ENCODE measurements at regions of chr2 and their contacts with region 1.

Region 1: DNA sequence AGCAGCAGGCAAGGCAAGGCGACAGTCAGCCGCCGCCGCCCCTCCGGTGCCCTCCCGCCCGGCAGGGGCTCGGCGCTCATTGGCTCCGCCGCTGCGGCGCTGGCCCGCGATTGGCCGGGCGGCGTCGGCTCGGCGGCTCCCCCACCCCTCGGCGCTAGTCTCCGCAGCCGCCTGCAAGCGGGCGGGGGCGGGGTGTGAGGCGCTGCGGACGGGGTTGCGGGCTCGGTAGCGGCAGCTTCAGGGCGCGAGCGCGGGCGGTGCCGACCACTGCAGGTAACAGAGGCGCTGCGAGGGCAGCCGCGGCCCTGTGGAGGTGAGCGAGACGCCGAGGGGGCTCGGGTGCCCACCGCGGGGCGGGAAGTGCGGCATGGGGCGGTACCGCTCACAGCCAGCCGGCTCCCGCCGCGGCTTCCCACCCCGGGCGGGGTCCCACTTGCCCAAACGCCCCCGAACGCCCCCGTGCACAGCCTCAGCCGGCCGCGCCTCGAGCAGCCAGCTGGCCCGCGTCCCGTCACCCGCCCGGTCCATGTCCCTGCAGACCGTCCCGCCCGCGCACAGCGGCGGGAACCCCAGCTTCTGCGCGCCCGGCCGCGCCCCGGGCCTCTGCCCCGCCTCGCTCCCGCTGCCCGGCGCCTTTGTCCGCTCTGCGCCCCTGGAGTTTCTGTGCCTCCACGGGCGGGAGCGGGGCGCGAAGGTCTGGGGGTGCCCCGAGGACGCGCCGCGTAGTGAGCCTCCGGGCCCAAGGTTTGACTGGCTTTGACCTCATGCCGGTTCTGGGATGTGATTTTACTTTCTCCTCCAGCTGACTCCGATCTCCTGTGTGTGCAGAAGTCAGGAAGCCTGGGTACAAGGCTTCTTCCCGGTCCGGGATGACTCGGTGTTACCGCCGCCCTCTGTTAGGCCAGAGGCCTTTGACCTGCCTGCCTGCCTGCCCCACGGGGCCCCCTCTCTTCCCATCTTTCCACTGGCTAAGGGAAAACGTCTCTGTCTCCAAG is at the start of gene SANBR:
- DNase-seq: peak; percentile 24 to 88
- H3K4me3 ChIP-seq: peak within 1 kb of the TSS; percentile 88 to 91
- H3K27ac ChIP-seq: peak within 1 kb of the TSS; percentile 54 to 59
- H3K4me1 ChIP-seq: no peaks in the 10 kb centered on the region
- H3K27me3 ChIP-seq: no peaks in the 10 kb centered on the region
- CTCF ChIP-seq: no peak
- total RNA-seq, gene SANBR: 10.7 TPM

Region 2: DNA sequence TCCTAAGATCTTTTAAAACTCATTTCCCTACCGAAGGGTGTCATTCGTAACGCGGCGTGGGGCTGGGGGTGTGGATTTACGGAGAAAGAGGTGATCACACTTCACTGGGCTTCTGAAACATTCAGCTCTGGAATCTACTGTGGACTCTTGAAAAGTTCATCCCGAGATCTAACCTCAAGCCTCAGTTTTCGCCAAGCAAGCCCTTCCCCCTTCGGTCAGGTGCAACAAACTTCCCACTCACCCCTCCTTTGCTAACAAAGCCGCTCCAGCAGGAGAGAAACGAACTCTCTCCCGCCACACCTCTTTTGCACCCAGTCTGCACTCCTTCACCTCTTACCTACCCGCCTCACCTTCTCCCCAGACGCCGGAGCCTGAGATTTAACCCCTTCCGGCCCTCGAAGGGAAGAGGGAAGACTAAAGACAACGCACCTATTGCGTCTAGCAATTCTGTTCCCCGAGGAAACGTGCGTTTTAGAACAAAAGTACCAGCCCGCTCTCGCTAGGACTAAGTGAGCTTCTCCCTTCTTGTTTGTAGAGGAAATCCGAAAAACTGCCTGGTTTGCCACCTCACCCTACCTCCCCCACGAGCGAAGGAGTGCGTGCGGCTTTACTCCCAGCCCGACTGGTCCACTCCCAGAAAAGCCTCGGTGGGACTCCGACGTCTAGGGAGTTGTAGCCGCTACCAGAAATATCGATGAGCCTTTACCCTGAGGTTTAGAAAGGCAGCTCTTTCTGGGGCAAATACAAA is 49.0 kb before region 1 on chr2:
- intact Hi-C with region 1: loop called (anchors 2 kb)
- DNase-seq: peak in 1 of 2 donors; percentile 76
- H3K4me3 ChIP-seq: peak overlapping the region; percentile 78 to 87
- H3K27ac ChIP-seq: peak overlapping the region; percentile 83 to 94
- H3K4me1 ChIP-seq: peaks cover 0 to 24% of the 10 kb centered on the region in 2 donors
- H3K27me3 ChIP-seq: no peaks in the 10 kb centered on the region
- CTCF ChIP-seq: no peak

Region 3: DNA sequence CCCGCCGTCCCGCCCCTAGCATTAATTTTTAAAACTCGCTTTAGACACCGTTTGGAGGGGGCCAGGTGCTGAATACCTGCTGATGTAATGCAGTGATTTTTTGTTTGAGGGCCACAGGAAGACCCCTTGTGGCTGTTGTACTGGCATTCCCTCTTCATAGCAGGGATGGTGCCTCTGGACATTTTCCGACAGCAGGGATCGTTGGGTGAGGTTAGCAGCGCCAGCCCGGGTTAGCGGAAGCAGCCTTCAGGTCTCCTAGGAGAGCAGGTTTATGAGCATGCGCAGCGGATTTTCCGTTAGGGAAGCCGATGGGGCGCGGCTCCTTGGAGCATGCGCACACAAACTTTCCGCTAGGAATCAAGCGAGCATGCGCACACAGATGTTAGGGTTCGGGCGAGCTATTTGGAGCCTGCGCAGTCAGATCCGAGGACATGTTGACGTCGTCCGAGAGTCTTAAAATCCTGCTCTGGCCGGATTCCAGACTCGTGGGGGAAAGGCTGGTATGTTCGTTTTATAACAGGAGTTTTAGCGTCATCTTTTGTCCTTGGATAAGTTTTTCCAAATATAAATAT is 78.8 kb after region 1 on chr2:
- intact Hi-C with region 1: loop called (anchors 2 kb)
- DNase-seq: peak; percentile 79 to 97
- H3K4me3 ChIP-seq: peak overlapping the region; percentile 50 to 72
- H3K27ac ChIP-seq: peak overlapping the region; percentile 62 to 71
- H3K4me1 ChIP-seq: peaks cover 0 to 9% of the 10 kb centered on the region in 2 donors
- H3K27me3 ChIP-seq: no peaks in the 10 kb centered on the region
- CTCF ChIP-seq: no peak